Common myeloid progenitor, CD34-positive (primary cell): ENCODE measurements at regions of chr1 and their contacts with region 1.

Region 1: GRCh38 chr1:9270290-9270883 is 22.3 kb upstream of the SPSB1 start:
- DNase-seq: no peak
- H3K4me3 ChIP-seq: no peak overlapping the region
- H3K27ac ChIP-seq: no peak overlapping the region
- H3K4me1 ChIP-seq: peaks cover 0 to 15% (median under 1%) of the 10 kb centered on the region in 4 experiments
- H3K27me3 ChIP-seq: peaks cover 0 to 3% (median 0%) of the 10 kb centered on the region in 5 experiments

Region 2: DNA sequence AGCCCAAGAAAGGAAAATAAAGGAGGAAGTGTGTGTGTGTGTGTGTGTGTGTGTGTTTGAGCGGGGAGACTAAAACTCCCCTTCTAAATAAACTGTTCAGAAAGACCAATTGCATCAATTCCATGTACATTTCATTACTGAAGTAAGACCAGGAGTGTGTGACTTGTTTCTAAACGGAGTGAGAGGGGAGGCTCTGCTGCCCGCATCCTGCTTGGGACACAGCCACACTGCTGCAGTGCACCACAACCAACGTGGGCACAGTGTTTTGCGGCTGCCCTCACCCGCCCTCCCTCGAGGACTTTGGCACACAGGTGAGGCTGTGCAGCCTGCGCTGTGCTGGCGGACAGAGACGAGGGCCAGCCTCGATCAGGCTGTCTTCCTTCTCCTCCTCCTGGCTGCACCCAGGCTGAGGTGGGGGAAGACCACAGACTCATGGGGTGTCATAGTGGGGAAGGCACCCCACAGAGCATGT is 66.8 kb before region 1 on chr1:
- CTCF ChIA-PET with region 1: no interaction called
- POLR2A ChIA-PET with region 1: no interaction called
- DNase-seq: peak; percentile 26 to 62 (median 50)
- H3K4me3 ChIP-seq: no peak overlapping the region
- H3K27ac ChIP-seq: no peak overlapping the region
- H3K4me1 ChIP-seq: peaks cover 0 to 25% (median 16%) of the 10 kb centered on the region in 4 experiments
- H3K27me3 ChIP-seq: peaks cover 4 to 73% (median 48%) of the 10 kb centered on the region in 5 experiments

Region 3: DNA sequence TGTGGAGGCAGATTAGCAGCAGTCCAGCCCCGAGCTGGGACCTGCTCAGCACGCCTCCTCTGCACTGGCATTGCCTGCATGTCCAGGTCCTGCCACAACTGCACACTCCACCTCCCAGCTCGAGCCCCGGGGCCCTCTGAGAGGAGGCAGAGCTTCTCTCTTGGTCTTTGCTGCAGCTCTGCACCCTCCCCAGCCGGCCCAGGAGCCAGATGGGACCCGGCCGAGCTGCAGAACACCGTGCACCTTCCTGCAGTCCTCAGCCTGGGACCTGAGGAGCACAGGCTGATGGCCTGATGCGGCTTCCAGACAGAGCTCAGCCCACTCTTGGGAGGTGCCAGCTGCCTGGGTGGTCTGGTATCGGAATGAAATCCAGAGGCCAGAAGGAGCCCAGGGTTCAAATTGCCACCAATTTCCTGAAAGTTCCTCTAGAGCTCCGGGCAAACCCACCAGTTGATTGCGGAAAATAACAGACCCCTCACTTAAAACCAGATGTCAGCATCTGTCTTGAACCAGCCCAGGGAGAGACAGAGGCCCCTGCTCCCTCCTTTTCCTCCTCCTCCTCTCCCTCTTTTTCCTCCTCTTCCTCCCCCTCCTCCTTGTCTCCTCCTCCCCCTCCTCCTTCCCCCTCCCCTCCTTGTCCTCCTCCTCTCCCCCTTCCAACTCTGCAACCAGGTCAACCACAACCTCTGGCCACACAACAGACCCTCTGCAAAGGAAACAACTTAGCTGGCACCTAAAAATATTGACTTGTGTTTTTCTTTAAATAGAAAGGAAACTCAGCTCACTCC is 11.7 kb after region 1 on chr1:
- CTCF ChIA-PET with region 1: interaction called, 10 read pairs
- POLR2A ChIA-PET with region 1: no interaction called
- DNase-seq: peak in 2 of 3 donors; percentile 29 to 43
- H3K4me3 ChIP-seq: no peak overlapping the region
- H3K27ac ChIP-seq: no peak overlapping the region
- H3K4me1 ChIP-seq: peaks cover 0 to 21% (median 15%) of the 10 kb centered on the region in 4 experiments
- H3K27me3 ChIP-seq: peaks cover 0 to 15% (median 3%) of the 10 kb centered on the region in 5 experiments